ENCODE measurements at regions of chr15 and their contacts with region 1.

Region 1: DNA sequence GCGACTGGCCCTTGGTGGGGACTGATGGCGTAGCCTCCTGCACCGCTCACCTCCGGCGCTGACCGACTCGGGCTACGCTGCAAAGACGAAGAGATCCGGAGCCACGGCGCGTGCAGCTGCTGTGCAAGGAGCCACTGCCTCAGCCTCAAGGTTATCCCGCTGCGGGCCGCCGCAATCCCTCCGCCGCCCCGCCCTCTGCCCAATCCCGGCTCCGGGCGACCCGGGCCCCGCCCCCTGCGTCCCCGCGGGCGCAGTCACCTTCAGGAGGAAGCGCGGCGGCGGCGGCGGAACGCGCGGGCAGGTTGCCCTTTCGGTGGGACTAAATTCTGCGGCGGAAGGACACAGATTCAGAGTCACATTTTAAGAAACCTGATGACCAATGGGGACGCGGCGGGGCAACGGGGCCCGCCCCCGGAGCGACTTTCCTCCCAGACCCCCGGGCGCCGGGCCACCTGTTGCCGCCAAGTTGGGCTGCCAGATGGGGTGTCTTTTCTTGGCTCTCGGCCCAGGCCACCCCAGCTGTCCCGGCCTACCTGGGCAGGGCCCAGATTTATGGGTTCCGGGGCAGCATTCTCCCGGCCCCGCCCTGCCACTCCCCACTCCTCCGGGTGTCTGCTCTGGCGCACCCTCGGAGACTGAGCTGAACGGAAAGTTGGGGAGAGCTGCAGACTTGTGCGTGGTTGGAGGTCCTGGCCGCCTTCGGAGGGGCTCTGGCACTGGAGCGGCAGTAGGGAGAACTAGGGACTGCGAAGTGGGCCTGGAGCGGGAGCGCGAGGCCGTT is at the start of gene PKM:
- DNase-seq: peak; percentile 99
- ATAC-seq: peak; percentile 48
- H3K4me3 Mint-ChIP-seq: peak within 1 kb of the TSS; percentile 98
- H3K27ac Mint-ChIP-seq: peak within 1 kb of the TSS; percentile 99
- H3K4me1 Mint-ChIP-seq: peaks cover 27% of the 10 kb centered on the region
- H3K27me3 Mint-ChIP-seq: no peaks in the 10 kb centered on the region
- total RNA-seq, gene PKM: 2,479 to 3,112 TPM

Region 2: GRCh38 chr15:72117486-72118399 is 113.5 kb before region 1 on chr15 and contains the start of gene MYO9A:
- CTCF ChIA-PET with region 1: interaction called, 5 read pairs
- POLR2A ChIA-PET with region 1: interaction called, 8 read pairs
- intact Hi-C with region 1: loop called (anchors 1 to 2 kb)
- DNase-seq: peak; percentile 100
- ATAC-seq: peak; percentile 73
- H3K4me3 Mint-ChIP-seq: peak within 1 kb of the TSS; percentile 98
- H3K27ac Mint-ChIP-seq: peak within 1 kb of the TSS; percentile 96
- H3K4me1 Mint-ChIP-seq: peaks cover 40% of the 10 kb centered on the region
- H3K27me3 Mint-ChIP-seq: no peaks in the 10 kb centered on the region
- total RNA-seq, gene MYO9A: 19.0 to 20.3 TPM

Region 3: GRCh38 chr15:72217216-72217615 is 14.0 kb before region 1 on chr15:
- CTCF ChIA-PET with region 1: interaction called, 17 read pairs
- POLR2A ChIA-PET with region 1: interaction called, 6 read pairs
- intact Hi-C with region 1: no loop called
- DNase-seq: no peak
- ATAC-seq: no peak
- H3K4me3 Mint-ChIP-seq: no peak overlapping the region
- H3K27ac Mint-ChIP-seq: no peak overlapping the region
- H3K4me1 Mint-ChIP-seq: peaks cover 41% of the 10 kb centered on the region
- H3K27me3 Mint-ChIP-seq: no peaks in the 10 kb centered on the region

Region 4: GRCh38 chr15:72272213-72273002 is 41.2 kb after region 1 on chr15 and contains the start of gene PARP6:
- CTCF ChIA-PET with region 1: interaction called, 18 read pairs
- POLR2A ChIA-PET with region 1: interaction called, 6 read pairs
- intact Hi-C with region 1: loop called (anchors 1 kb)
- DNase-seq: peak; percentile 99
- ATAC-seq: peak; percentile 98
- H3K4me3 Mint-ChIP-seq: peak within 1 kb of the TSS; percentile 80
- H3K27ac Mint-ChIP-seq: peak within 1 kb of the TSS; percentile 92
- H3K4me1 Mint-ChIP-seq: peaks cover 35% of the 10 kb centered on the region
- H3K27me3 Mint-ChIP-seq: no peaks in the 10 kb centered on the region
- total RNA-seq, gene PARP6: 41.4 to 58.2 TPM

Region 5: DNA sequence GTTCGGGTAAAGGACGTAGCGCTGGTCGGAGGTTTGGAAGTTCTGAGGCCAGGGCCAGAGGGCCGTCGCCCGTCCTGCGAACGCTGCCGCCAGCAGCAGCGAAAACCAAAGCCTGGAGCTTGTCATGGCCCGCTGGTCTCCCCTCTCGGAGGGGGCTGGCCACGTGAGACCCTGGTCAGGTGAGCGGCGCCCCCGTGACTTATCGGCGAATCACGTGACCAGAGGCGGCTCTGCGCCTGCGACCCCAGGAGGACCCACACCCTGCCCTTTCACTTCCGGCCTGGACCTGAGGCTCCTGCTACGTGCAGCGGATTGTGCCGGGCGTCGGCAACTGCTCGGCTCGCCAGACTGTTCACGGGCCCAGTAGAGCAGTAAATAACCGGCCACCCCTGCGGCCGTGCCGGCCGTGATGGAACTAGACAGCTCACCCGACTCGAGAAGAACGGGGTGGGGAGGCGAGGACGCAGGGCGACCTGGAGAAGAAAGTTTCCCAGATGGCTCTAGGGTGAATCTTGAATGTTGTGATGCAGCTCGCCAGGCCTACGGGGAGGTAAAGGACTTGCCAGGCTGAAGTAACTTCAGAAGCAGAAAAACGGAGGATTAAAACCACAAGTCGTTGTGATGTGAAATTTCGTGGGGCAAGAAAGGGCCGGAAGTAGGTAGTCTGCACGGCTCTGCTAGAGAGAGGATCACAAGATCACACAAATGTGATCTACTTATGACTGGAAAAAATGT is 144.8 kb after region 1 on chr15 and contains the start of gene HEXA:
- CTCF ChIA-PET with region 1: no interaction called
- POLR2A ChIA-PET with region 1: interaction called, 5 read pairs
- intact Hi-C with region 1: loop called (anchors 1 to 5 kb)
- DNase-seq: peak; percentile 99
- ATAC-seq: peak; percentile 83
- H3K4me3 Mint-ChIP-seq: peak within 1 kb of the TSS; percentile 89
- H3K27ac Mint-ChIP-seq: peak within 1 kb of the TSS; percentile 96
- H3K4me1 Mint-ChIP-seq: peaks cover 45% of the 10 kb centered on the region
- H3K27me3 Mint-ChIP-seq: no peaks in the 10 kb centered on the region
- total RNA-seq, gene HEXA: 38.8 to 54.2 TPM

Region 6: DNA sequence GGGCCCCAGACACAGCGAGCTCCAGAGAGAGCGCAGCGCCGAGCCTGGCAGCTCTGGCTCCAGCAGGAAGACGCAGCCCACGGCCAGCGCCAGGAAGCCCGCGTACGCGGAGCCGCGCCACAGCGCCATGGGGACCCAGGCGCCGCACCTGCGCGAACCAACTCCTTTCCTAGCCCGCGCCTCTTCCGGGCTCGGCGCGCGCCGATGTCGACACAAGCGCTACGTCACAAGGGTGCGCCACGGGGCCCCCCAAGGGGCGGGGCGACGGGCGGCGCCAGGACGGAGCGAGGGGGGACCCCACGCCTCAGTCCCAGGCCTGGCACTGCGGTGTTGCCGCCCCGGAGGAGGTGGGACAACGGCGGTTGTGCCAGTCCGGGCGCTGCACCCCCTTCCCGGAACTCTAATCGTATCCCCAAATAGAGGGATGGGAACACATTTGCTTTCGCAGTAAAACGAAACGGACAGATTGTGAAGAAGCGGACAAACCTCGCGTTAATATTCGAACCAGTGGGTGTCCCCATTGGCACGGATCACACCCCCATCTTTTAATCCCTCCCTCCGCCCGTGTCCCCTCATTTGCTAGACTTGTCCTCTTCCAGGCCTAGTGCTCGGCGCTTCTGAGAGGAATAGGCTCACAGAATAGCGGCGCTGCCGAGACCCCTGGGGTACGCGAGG is 552.4 kb after region 1 on chr15 and contains the start of gene ADPGK:
- CTCF ChIA-PET with region 1: no interaction called
- POLR2A ChIA-PET with region 1: interaction called, 6 read pairs
- intact Hi-C with region 1: loop called in 1 of 2 experiments (anchors 1 kb)
- DNase-seq: peak; percentile 95
- ATAC-seq: peak; percentile 80
- H3K4me3 Mint-ChIP-seq: peak within 1 kb of the TSS; percentile 97
- H3K27ac Mint-ChIP-seq: peak within 1 kb of the TSS; percentile 99
- H3K4me1 Mint-ChIP-seq: peaks cover 60% of the 10 kb centered on the region
- H3K27me3 Mint-ChIP-seq: no peaks in the 10 kb centered on the region
- total RNA-seq, gene ADPGK: 58.0 to 70.8 TPM